IMR-90 (cell line): ENCODE measurements at regions of chr12 and their contacts with region 1.

Region 1: GRCh38 chr12:106136263-106136662 is 2.5 kb downstream of the NUAK1 start:
- DNase-seq: peak; percentile 83
- ATAC-seq: peak; percentile 4; the same call in 1 of the 2 replicates
- H3K4me3 ChIP-seq: peak overlapping the region; percentile 15
- H3K27ac ChIP-seq: peak overlapping the region; percentile 2; the same call in 1 of the 2 replicates
- H3K4me1 ChIP-seq: peaks cover 29% of the 10 kb centered on the region
- H3K27me3 ChIP-seq: no peaks in the 10 kb centered on the region
- CTCF ChIP-seq: peak; percentile 91
- POLR2A ChIP-seq: 0 out of 2 replicates have a peak, but pooled peaks have one; percentile 22
- RAD21 ChIP-seq: peak; percentile 96

Region 2: GRCh38 chr12:105420659-105421240 is 715.5 kb before region 1 on chr12:
- CTCF ChIA-PET with region 1: interaction called, 26 read pairs
- POLR2A ChIA-PET with region 1: interaction called, 7 read pairs
- dilution Hi-C with region 1: no loop called
- in situ Hi-C with region 1: loop called (anchors 5 kb)
- intact Hi-C with region 1: loop called (anchors 1 kb)
- DNase-seq: peak; percentile 77
- ATAC-seq: peak; percentile 64
- H3K4me3 ChIP-seq: no peak overlapping the region
- H3K27ac ChIP-seq: no peak overlapping the region
- H3K4me1 ChIP-seq: peaks cover 13% of the 10 kb centered on the region
- H3K27me3 ChIP-seq: no peaks in the 10 kb centered on the region
- CTCF ChIP-seq: peak; percentile 97
- POLR2A ChIP-seq: peak; percentile 69
- RAD21 ChIP-seq: peak; percentile 100

Region 3: DNA sequence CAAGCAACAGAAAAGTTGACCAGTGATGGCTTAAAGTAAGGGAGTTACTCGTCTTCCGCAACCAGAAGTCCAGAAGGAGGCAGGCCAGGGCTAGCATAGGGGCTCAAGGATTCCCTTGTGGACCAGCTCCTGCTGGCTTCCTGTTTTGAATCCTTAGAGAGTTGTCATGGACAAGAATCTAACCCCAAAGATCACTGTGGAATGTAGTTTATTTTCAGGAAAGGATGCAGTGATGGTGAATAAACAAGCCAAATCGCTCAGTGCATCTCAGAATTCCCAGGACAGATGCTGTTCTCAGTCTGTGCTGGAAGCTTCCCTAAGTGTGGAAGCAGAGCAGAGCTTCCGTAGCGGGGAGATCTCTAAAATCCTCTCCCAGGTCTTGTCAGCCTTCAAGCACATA is 494.5 kb before region 1 on chr12:
- CTCF ChIA-PET with region 1: interaction called, 11 read pairs
- POLR2A ChIA-PET with region 1: no interaction called
- dilution Hi-C with region 1: no loop called
- in situ Hi-C with region 1: no loop called
- intact Hi-C with region 1: no loop called
- DNase-seq: peak; percentile 11
- ATAC-seq: peak; percentile 75
- H3K4me3 ChIP-seq: no peak overlapping the region
- H3K27ac ChIP-seq: no peak overlapping the region
- H3K4me1 ChIP-seq: no peaks in the 10 kb centered on the region
- H3K27me3 ChIP-seq: no peaks in the 10 kb centered on the region; the same call in 1 of the 2 replicates
- CTCF ChIP-seq: no peak
- POLR2A ChIP-seq: no peak
- RAD21 ChIP-seq: peak; percentile 20; the same call in 1 of the 2 replicates

Region 4: DNA sequence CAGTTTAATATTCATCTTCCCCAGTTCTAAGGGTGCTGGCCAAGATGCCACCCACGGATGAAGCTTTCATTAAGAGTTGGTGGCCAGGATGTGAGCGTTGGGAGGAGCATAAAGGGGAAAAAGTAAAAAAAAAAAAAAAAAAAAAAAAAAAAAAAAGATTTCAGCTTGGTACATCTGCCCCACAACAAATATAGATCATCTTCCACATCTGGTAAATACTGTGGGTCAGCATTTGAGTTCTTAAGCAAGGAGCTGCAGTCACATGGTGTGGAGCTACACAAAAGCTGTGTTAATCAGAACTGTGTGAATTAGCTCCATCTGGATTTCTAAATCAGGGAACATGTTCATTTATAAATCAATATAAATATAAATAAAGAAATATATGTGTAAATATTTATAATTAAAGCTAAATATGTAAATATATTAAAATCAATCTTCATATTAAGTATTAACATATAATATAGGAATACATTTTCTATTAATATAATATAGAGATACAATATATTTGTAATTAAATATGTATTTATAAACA is 259.8 kb before region 1 on chr12:
- CTCF ChIA-PET with region 1: no interaction called
- POLR2A ChIA-PET with region 1: interaction called, 20 read pairs
- dilution Hi-C with region 1: no loop called
- in situ Hi-C with region 1: no loop called
- intact Hi-C with region 1: no loop called
- DNase-seq: no peak
- ATAC-seq: no peak
- H3K4me3 ChIP-seq: no peak overlapping the region
- H3K27ac ChIP-seq: no peak overlapping the region
- H3K4me1 ChIP-seq: no peaks in the 10 kb centered on the region
- H3K27me3 ChIP-seq: no peaks in the 10 kb centered on the region; the same call in 1 of the 2 replicates
- CTCF ChIP-seq: no peak
- POLR2A ChIP-seq: no peak
- RAD21 ChIP-seq: no peak

Region 5: GRCh38 chr12:105986779-105987684 is 149.2 kb before region 1 on chr12:
- CTCF ChIA-PET with region 1: no interaction called
- POLR2A ChIA-PET with region 1: no interaction called
- dilution Hi-C with region 1: no loop called
- in situ Hi-C with region 1: no loop called
- intact Hi-C with region 1: loop called (anchors 2 kb)
- DNase-seq: peak; percentile 95
- ATAC-seq: peak; percentile 75
- H3K4me3 ChIP-seq: no peak overlapping the region
- H3K27ac ChIP-seq: peak overlapping the region; percentile 89
- H3K4me1 ChIP-seq: peaks cover 20% of the 10 kb centered on the region
- H3K27me3 ChIP-seq: no peaks in the 10 kb centered on the region
- CTCF ChIP-seq: no peak
- POLR2A ChIP-seq: no peak; the same call in 1 of the 2 replicates
- RAD21 ChIP-seq: 0 out of 2 replicates have a peak, but pooled peaks have one; percentile 3

Region 6: DNA sequence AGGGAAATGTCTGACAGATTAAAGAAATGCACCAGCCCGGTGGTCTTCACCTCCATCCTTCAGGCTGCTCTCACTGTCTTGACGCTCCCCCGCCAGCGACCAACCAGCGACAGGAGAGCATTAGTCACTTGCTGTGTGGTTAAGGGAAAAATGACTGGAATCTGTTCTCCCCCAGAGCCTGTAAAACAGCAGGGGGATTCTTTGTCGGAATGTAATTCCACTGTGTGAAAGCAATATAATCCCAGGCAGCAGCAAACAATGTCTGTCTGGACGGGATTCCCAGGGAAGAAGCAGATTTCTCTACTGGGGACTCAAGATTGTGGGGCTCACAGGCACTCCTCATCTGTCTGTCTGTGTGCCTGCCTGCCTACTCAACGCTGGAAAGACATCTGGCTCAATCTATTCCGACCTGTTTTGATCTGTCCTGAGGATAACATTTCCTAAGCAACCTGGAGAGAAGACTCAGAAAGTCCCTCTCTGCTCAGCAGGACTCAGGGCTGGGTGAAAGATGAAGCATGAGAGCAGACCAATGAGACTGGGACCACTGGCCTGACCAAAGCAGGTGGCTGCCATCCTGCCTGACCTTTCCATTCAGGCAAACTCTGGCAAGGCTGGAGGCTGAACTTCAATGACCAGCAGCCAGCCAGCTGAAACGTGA is 52.1 kb before region 1 on chr12:
- CTCF ChIA-PET with region 1: interaction called, 3 read pairs
- POLR2A ChIA-PET with region 1: no interaction called
- dilution Hi-C with region 1: no loop called
- in situ Hi-C with region 1: no loop called
- intact Hi-C with region 1: loop called (anchors 2 kb)
- DNase-seq: peak; percentile 88
- ATAC-seq: peak; percentile 76
- H3K4me3 ChIP-seq: no peak overlapping the region
- H3K27ac ChIP-seq: peak overlapping the region; percentile 66
- H3K4me1 ChIP-seq: peaks cover 42% of the 10 kb centered on the region
- H3K27me3 ChIP-seq: no peaks in the 10 kb centered on the region
- CTCF ChIP-seq: no peak
- POLR2A ChIP-seq: peak; percentile 18; the same call in 1 of the 2 replicates
- RAD21 ChIP-seq: no peak

Region 7: GRCh38 chr12:106519607-106520021 is 383.4 kb after region 1 on chr12:
- CTCF ChIA-PET with region 1: no interaction called
- POLR2A ChIA-PET with region 1: no interaction called
- dilution Hi-C with region 1: no loop called
- in situ Hi-C with region 1: no loop called
- intact Hi-C with region 1: no loop called
- DNase-seq: peak; percentile 70
- ATAC-seq: peak; percentile 76
- H3K4me3 ChIP-seq: no peak overlapping the region
- H3K27ac ChIP-seq: peak overlapping the region; percentile 41; the same call in 1 of the 2 replicates
- H3K4me1 ChIP-seq: peaks cover 3% of the 10 kb centered on the region; the same call in 1 of the 2 replicates
- H3K27me3 ChIP-seq: no peaks in the 10 kb centered on the region
- CTCF ChIP-seq: no peak
- POLR2A ChIP-seq: no peak
- RAD21 ChIP-seq: no peak